ENCODE measurements at regions of chr16 and their contacts with region 1.

Region 1: DNA sequence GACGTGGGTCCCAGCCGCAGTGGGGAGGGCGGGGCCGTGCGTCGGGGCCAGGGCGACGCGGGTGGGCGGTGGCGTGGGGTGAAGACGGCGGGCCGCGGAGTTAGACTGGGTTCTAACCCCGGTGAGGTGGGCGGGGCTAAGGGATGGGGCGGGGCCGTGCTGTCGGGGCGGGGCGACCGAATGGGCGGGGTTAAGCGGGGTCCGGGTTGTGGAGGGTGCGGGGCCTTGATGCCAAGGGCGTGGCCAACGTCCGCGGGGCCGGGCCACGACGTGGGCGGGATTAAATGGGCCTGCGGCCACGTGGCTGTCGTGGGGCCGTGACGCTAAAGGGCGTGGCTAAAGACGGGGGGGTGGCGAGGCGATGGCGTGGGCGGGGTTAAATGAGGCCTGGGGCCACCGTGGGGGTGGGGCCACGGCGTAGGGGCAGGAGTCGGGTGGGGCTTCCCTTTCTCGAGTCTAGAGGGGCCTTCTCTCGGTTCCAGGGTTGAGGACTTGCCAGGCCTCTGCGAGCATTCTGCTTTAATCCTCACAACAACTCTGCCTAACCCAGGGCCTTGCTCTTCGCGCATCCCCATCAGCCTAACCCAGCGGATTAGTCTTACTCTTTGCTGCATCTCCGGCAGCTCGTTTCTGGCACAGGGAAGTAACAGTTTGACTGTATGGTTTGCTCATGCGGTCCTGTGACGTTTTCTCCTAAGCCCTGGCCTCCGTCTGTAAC is 739 bp downstream of the TCF25 start:
- DNase-seq: peak; percentile 99
- ATAC-seq: peak; percentile 78
- H3K4me3 Mint-ChIP-seq: peak overlapping the region; percentile 87
- H3K27ac Mint-ChIP-seq: peak overlapping the region; percentile 95
- H3K4me1 Mint-ChIP-seq: peaks cover 14% of the 10 kb centered on the region
- H3K27me3 Mint-ChIP-seq: no peaks in the 10 kb centered on the region

Region 2: GRCh38 chr16:88569985-88570690 is 1304.0 kb before region 1 on chr16 and contains the start of gene ZC3H18:
- CTCF ChIA-PET with region 1: no interaction called
- POLR2A ChIA-PET with region 1: no interaction called
- intact Hi-C with region 1: loop called in 1 of 2 experiments (anchors 2 kb)
- DNase-seq: peak; percentile 99
- ATAC-seq: peak; percentile 83
- H3K4me3 Mint-ChIP-seq: peak within 1 kb of the TSS; percentile 88
- H3K27ac Mint-ChIP-seq: peak within 1 kb of the TSS; percentile 79
- H3K4me1 Mint-ChIP-seq: peaks cover 44% of the 10 kb centered on the region
- H3K27me3 Mint-ChIP-seq: no peaks in the 10 kb centered on the region
- total RNA-seq, gene ZC3H18: 70.0 to 76.4 TPM

Region 3: DNA sequence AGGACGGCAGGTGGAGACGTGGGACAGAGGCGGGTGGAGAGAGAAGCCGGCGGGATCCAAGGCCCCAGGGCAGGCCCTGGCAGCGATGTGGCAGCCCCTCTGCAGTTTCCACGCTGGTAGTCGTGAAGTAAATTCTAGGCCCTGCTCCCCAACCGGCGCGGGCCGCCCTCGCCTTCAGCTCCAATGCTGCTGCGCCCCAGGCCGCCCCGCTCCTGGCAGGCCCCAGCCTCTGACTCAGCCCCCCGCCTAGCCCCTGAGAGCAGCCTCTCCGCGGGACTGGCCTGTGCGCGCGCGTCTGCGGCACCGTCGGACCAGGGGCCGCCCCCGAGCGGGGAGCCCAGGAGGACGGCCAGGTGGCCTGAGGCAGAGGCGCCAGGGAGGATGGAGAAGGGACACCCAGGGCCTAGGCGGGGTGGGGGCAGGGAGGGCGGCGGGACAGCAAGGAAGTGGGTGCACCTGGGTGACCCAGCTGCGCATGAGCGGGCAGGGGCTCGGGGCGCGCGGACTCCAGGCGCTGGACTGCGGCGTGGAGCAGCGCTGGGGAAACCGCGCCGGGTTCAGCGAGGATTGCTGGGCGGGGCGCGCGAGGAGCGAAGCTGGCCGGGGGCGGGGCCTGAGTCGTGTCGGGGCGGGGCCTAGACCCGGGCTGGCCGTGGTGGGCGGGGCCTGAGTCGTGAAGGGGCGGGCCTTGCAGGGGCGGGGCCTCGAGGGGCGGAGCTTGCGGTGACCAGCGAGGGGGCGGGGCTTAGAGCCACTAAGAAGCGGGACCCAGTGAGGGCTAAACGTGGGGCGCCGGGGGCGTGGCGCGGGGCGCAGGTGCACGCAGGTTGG is 627.0 kb before region 1 on chr16:
- CTCF ChIA-PET with region 1: no interaction called
- POLR2A ChIA-PET with region 1: no interaction called
- intact Hi-C with region 1: loop called in 1 of 2 experiments (anchors 1 kb)
- DNase-seq: peak; percentile 99
- ATAC-seq: peak; percentile 93
- H3K4me3 Mint-ChIP-seq: peak overlapping the region; percentile 71
- H3K27ac Mint-ChIP-seq: no peak overlapping the region
- H3K4me1 Mint-ChIP-seq: peaks cover 15% of the 10 kb centered on the region
- H3K27me3 Mint-ChIP-seq: no peaks in the 10 kb centered on the region

Region 4: DNA sequence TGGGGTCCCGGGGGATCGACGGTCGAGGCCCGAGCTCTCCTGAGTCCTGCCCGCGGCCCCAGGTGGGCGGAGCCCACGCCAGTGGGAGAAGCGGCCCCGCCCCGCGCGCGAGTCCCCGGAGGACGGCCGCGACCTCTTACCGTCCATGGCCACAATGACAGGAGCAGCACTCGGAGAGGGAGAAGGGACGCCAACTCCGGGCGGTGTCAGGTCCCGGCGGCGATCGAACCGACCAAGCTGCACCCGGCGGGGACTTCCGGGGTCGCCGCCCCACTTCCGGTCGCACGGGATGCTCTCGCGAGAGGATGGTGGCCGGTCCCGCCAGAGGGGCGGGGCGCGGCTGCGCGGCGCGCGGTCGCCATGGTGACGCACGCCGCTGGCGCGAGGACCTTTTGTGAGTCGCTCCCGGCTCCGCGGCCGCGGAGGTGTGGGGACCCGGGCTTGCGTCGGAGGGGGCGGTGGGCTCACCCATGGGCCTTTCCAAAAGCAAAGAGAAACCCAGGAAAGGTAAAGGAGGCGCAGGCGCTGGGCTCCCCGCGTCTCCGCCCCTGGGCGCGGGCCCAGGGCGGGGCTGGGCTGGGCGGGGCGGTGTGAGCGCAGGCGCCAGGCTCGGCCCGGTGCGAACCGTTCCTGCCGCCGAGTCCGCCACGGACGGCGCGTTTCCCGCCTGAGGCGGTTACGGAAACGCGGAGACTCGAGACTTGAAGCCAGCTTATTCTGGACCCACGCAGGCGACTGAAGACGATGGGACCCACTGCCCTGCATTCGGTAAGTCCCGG is 216.5 kb before region 1 on chr16 and contains the starts of genes CHMP1A and SPATA33:
- CTCF ChIA-PET with region 1: no interaction called
- POLR2A ChIA-PET with region 1: interaction called, 3 read pairs
- intact Hi-C with region 1: loop called in 1 of 2 experiments (anchors 1 kb)
- DNase-seq: peak; percentile 96
- ATAC-seq: peak; percentile 93
- H3K4me3 Mint-ChIP-seq: peak within 1 kb of the TSS; percentile 90
- H3K27ac Mint-ChIP-seq: peak within 1 kb of the TSS; percentile 83
- H3K4me1 Mint-ChIP-seq: peaks cover 28% of the 10 kb centered on the region
- H3K27me3 Mint-ChIP-seq: no peaks in the 10 kb centered on the region
- total RNA-seq, gene CHMP1A: 37.9 to 67.3 TPM
- total RNA-seq, gene SPATA33: 6.8 to 11.6 TPM

Region 5: GRCh38 chr16:89711601-89712273 is 162.4 kb before region 1 on chr16:
- CTCF ChIA-PET with region 1: no interaction called
- POLR2A ChIA-PET with region 1: no interaction called
- intact Hi-C with region 1: loop called in 1 of 2 experiments (anchors 1 kb)
- DNase-seq: peak; percentile 92
- ATAC-seq: peak; percentile 89
- H3K4me3 Mint-ChIP-seq: peak overlapping the region; percentile 76
- H3K27ac Mint-ChIP-seq: no peak overlapping the region
- H3K4me1 Mint-ChIP-seq: peaks cover 8% of the 10 kb centered on the region
- H3K27me3 Mint-ChIP-seq: no peaks in the 10 kb centered on the region

Region 6: DNA sequence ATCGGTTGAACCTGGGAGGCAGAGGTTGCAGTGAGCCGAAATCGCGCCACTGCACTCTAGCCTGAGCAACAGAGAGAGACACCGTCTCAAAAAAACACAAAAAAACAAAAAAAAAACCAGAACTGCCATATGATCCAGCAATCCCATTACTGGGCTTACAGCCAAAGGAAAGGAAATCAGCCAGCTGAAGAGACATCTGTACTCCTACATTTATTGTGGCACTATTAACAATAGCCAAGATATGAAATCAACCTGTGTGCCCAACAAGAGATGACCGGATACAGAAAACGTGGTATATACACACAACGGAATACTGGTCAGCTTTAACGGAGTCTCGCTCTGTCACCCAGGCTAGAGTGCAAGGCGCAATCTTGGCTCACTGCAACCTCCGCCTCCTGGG is 72.3 kb before region 1 on chr16:
- CTCF ChIA-PET with region 1: no interaction called
- POLR2A ChIA-PET with region 1: no interaction called
- intact Hi-C with region 1: no loop called
- DNase-seq: no peak
- ATAC-seq: no peak
- H3K4me3 Mint-ChIP-seq: no peak overlapping the region
- H3K27ac Mint-ChIP-seq: no peak overlapping the region
- H3K4me1 Mint-ChIP-seq: no peaks in the 10 kb centered on the region
- H3K27me3 Mint-ChIP-seq: no peaks in the 10 kb centered on the region

Region 7: GRCh38 chr16:89828199-89828778 is 45.8 kb before region 1 on chr16 and contains the start of gene SPIRE2:
- CTCF ChIA-PET with region 1: no interaction called
- POLR2A ChIA-PET with region 1: no interaction called
- intact Hi-C with region 1: loop called in 1 of 2 experiments (anchors 1 kb)
- DNase-seq: peak; percentile 85
- ATAC-seq: peak; percentile 89
- H3K4me3 Mint-ChIP-seq: peak within 1 kb of the TSS; percentile 52
- H3K27ac Mint-ChIP-seq: no peak within 1 kb of the TSS
- H3K4me1 Mint-ChIP-seq: no peaks in the 10 kb centered on the region
- H3K27me3 Mint-ChIP-seq: peaks cover 13% of the 10 kb centered on the region
- total RNA-seq, gene SPIRE2: 1.1 to 1.5 TPM

Region 8: DNA sequence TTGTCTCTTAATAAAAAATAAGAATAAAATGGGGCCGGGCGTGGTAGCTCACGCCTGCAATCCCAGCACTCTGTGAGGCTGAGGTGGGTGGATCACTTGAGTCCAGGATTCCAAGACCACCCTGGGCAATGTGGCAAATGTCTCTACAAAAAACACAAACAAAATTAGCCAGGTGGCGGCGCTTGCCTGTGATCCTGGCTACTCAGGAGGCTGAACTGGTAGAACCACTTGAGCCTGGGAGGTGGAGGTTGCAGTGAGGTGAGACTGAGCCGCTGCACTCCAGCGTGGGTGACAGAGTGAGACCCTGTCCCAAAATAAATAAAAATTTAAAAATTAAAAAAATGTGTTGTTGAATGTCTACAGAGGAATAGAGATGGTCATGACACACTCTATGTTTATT is 71.5 kb after region 1 on chr16:
- CTCF ChIA-PET with region 1: no interaction called
- POLR2A ChIA-PET with region 1: no interaction called
- intact Hi-C with region 1: loop called (anchors 1 to 2 kb)
- DNase-seq: no peak
- ATAC-seq: no peak
- H3K4me3 Mint-ChIP-seq: no peak overlapping the region
- H3K27ac Mint-ChIP-seq: no peak overlapping the region
- H3K4me1 Mint-ChIP-seq: no peaks in the 10 kb centered on the region
- H3K27me3 Mint-ChIP-seq: peaks cover 20% of the 10 kb centered on the region